ENCODE measurements at regions of chr1 and their contacts with region 1.

Region 1: GRCh38 chr1:27284425-27285273 is 37.3 kb upstream of the TMEM222 start:
- DNase-seq: peak; percentile 97
- ATAC-seq: peak; percentile 96
- H3K4me3 Mint-ChIP-seq: no peak overlapping the region
- H3K27ac Mint-ChIP-seq: no peak overlapping the region
- H3K4me1 Mint-ChIP-seq: no peaks in the 10 kb centered on the region
- H3K27me3 Mint-ChIP-seq: no peaks in the 10 kb centered on the region
- CTCF ChIP-seq: peak; percentile 88

Region 2: DNA sequence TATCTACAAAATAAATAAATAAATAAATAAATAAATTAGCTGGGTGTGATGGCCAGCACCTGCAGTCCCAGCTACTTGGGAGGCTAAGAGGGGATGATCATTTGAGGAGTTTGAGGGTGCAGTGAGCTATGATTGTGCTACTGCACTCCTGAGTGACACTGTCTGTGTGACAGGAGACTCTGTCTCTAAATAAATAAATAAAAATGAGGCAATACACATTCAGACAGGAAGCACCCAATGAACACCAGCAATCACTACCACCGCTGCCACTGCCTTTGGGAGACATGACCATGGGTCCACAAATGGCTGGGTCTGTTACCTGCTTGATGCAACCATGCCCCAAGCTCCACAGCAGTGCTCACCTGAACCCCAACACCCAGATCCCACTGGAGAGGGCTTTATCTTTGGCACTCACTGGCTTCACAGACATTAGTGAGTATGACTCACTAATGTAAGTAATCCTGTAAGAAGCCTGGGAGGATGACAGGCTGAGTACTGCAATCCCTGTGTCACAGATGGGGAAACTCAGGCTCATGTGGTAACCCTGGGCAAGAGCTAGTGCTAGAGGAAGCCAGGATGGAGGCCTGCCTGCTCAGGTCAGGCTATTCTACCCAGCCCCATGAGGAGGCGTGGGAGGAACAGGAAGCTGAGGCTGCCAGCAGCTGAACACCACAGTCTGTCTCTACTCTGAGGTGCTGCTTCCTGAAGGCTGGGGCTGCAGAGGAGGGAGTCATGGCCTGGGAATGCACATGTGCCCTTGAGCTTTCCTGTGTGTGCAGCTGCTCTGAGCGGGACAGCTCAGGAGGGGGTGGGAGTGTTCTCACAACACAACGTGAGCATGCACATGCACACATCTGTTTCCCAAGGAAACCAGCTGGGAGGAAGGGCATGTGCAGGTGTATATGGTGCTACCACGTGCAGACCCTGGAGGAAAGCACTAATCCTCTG is 172.7 kb before region 1 on chr1:
- CTCF ChIA-PET with region 1: interaction called, 29 read pairs
- POLR2A ChIA-PET with region 1: no interaction called
- intact Hi-C with region 1: no loop called
- DNase-seq: peak; percentile 92
- ATAC-seq: peak; percentile 97
- H3K4me3 Mint-ChIP-seq: peak overlapping the region; percentile 49
- H3K27ac Mint-ChIP-seq: peak overlapping the region; percentile 90
- H3K4me1 Mint-ChIP-seq: peaks cover 55% of the 10 kb centered on the region
- H3K27me3 Mint-ChIP-seq: no peaks in the 10 kb centered on the region
- CTCF ChIP-seq: no peak

Region 3: GRCh38 chr1:27192039-27192529 is 92.6 kb before region 1 on chr1:
- CTCF ChIA-PET with region 1: interaction called, 63 read pairs
- POLR2A ChIA-PET with region 1: no interaction called
- intact Hi-C with region 1: no loop called
- DNase-seq: no peak
- ATAC-seq: no peak
- H3K4me3 Mint-ChIP-seq: no peak overlapping the region
- H3K27ac Mint-ChIP-seq: no peak overlapping the region
- H3K4me1 Mint-ChIP-seq: no peaks in the 10 kb centered on the region
- H3K27me3 Mint-ChIP-seq: no peaks in the 10 kb centered on the region
- CTCF ChIP-seq: no peak

Region 4: DNA sequence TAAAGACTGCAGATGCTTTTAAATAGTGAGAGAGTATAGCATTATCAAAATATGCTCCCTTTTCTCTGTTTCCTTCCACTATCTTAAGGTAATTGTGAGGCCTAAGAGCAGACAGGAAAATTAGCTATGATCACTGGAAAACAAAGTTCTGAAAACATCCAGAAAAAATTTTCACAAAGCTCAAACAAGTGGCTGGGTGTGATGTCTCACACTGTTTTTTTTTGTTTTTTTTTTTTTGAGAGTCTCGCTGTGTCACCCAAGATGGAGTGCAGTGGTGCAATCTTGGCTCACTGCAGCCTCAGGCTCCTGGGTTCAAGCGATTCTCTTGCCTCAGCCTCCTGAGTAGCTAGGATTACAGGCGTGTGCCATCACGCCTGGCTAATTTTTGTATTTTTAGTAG is 43.0 kb before region 1 on chr1:
- CTCF ChIA-PET with region 1: interaction called, 10 read pairs
- POLR2A ChIA-PET with region 1: no interaction called
- intact Hi-C with region 1: no loop called
- DNase-seq: no peak
- ATAC-seq: no peak
- H3K4me3 Mint-ChIP-seq: no peak overlapping the region
- H3K27ac Mint-ChIP-seq: no peak overlapping the region
- H3K4me1 Mint-ChIP-seq: peaks cover 12% of the 10 kb centered on the region
- H3K27me3 Mint-ChIP-seq: no peaks in the 10 kb centered on the region
- CTCF ChIP-seq: no peak

Measured in activated CD8-positive, alpha-beta T cell treated with anti-CD3 and anti-CD28 coated beads for 36 hours (primary cell).